Activated CD4-positive, alpha-beta T cell treated with anti-CD3 and anti-CD28 coated beads, Interleukin-2, amount 10 ng/mL, durations not matched to agents 24 days and 14 days (primary cell): ENCODE measurements at regions of chr2 and their contacts with region 1.

Region 1: DNA sequence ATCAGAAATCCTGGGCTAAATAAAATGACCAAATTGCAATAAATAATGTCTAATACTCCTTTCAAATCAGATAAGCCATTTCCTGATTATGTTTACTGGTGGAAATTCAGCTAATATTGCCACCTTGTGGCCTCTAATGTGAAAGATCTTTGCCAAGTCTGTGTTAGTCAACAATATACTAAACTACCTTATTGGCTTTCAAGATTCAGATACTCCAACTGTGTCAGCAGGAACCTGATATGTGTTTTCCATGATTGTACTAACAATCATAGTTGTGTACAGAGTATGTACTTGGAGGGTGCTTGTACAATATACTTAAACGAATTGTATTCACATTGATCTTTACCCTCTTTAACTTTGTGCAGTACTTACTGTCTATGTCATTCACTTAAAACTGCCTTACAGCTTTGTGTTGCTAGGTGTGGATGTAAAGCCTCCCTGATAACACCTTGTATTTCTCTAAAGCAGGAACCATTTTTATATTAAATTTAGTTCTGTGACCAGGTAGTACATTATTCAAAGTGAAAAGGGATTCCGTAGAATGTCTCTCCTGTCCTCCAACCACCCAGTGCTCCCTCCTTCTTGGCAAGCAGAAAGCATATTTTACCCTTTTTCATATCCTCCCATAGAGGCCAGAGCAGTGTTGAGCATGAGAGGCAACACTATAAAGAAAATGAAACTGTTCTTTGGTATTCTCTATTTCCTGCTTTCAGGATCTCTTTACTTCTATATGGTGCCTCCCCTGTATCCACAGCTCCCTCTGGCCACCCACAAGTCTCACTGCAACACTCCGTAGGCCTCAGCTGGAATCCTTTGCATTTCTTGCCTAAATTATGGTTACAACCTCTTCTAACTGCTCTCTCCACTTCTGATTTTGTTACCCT is 75.2 kb upstream of the C2orf15 start:
- DNase-seq: peak; percentile 74
- H3K4me3 Mint-ChIP-seq: no peak overlapping the region
- H3K27ac Mint-ChIP-seq: no peak overlapping the region
- H3K4me1 Mint-ChIP-seq: no peaks in the 10 kb centered on the region
- H3K27me3 Mint-ChIP-seq: no peaks in the 10 kb centered on the region

Region 2: GRCh38 chr2:98649135-98649991 is 417.0 kb before region 1 on chr2:
- intact Hi-C with region 1: loop called (anchors 1 kb)
- DNase-seq: peak; percentile 94
- H3K4me3 Mint-ChIP-seq: no peak overlapping the region
- H3K27ac Mint-ChIP-seq: peak overlapping the region; percentile 48
- H3K4me1 Mint-ChIP-seq: peaks cover 47% of the 10 kb centered on the region
- H3K27me3 Mint-ChIP-seq: no peaks in the 10 kb centered on the region

Region 3: DNA sequence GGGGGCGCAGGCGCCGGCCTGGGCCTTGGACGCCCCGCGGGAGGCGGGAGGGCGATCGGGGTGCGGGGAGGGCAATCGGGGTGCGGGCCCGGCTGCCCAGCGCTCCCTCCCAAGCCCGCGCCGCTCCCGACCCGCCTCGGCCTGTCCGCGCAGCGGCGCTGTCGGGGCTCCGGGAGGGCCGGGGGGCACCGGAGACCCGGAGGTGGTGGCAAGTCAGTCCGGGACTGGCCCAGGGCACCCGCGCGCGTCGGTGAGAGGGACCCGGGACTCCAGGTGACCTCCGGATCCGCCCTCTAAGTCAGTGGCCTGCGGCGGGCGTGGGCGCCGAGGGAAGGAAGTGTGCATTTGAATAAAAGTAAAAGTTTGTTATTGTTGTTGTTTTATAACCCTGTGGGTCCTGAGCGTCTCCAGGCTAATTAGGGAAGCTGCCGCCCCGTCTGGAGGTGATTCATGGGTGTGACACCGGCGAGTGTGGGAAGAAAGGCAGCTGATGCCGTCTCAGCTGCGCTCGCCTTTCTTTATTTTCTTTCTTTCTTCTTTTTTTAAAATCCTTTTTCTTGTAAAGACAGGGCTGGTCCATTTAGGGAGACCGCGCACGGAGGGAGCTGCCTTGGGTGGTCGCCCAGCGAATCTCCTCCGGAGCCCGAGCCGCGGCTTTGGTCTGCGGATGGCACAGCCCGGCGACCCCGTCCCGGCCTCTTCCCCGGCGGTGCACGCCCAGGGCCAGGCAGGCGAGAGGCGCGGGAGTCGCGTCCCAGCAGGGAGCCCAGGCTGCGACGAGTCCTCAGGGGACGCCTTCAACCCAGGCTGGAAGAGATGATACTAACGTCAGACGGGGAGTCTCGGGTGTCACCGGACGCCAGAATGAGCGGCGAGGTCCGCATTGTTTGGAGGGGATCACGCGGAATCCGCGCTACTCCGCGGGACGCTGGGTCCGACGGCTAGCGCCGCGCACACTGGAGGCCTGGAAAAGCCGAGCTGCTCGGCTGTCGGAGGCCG is 129.7 kb before region 1 on chr2:
- intact Hi-C with region 1: loop called (anchors 10 kb)
- DNase-seq: peak; percentile 72
- H3K4me3 Mint-ChIP-seq: peak overlapping the region; percentile 74
- H3K27ac Mint-ChIP-seq: no peak overlapping the region
- H3K4me1 Mint-ChIP-seq: peaks cover 10% of the 10 kb centered on the region
- H3K27me3 Mint-ChIP-seq: peaks cover 74% of the 10 kb centered on the region